ENCODE measurements at regions of chr1 and their contacts with region 1.

Region 1: DNA sequence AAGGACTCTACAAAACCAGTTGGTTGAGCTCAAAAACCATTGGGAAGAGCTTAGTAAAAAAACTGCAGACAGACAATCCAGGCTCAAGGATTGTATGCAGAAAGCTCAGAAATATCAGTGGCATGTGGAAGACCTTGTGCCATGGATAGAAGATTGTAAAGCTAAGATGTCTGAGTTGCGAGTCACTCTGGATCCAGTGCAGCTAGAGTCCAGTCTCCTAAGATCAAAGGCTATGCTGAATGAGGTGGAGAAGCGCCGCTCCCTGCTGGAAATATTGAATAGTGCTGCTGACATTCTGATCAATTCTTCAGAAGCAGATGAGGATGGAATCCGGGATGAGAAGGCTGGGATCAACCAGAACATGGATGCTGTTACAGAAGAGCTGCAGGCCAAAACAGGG is 104.0 kb upstream of the BMP8A start:
- DNase-seq: no peak
- ATAC-seq: no peak

Region 2: DNA sequence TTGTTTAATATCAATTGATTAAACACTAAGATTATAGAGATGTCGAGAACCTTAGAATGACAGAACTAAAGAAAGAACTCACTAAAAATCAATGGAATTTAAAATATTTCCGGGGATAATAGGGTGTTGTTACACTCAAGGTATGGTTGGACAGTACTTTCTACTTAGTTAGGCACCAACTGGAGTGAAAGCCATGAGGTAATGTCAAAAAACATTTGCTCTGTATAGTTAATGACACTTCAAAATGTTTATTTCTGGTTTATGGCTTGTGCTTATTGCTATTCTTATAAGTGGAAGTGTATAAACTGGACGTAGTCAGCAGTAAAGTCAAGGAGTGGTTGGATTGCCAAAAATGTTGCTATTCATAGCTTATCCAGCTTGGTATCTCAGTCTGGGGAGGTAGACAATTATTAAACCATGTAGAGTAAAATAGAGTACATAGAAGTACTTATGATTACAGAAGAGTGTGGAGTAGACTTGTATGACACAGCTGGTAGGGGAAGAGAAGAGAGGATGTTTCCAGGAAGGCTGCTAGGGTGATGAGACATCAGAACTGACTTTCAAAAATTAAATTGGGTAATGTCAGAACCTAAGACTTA is 47.4 kb after region 1 on chr1:
- intact Hi-C with region 1: loop called (anchors 10 kb)
- DNase-seq: no peak
- ATAC-seq: peak; percentile 88